T-cell (primary cell): ENCODE measurements at regions of chr9 and their contacts with region 1.

Region 1: GRCh38 chr9:131530920-131531832 is at the start of gene UCK1:
- DNase-seq: peak; percentile 31 to 89 (median 63)
- ATAC-seq: peak; percentile 89 to 94 (median 92)
- H3K4me3 ChIP-seq: peak within 1 kb of the TSS; percentile 66 to 71
- H3K4me3 Mint-ChIP-seq: peak within 1 kb of the TSS; percentile 66 to 75 (median 69)
- H3K27ac ChIP-seq: peak within 1 kb of the TSS; percentile 58
- H3K27ac Mint-ChIP-seq: peak within 1 kb of the TSS in 1 of 2 donors; percentile 75
- H3K4me1 ChIP-seq: peaks cover 16 to 46% of the 10 kb centered on the region in 2 experiments
- H3K4me1 Mint-ChIP-seq: peaks cover 25 to 39% (median 34%) of the 10 kb centered on the region in 3 donors
- H3K27me3 ChIP-seq: no peaks in the 10 kb centered on the region
- H3K27me3 Mint-ChIP-seq: no peaks in the 10 kb centered on the region
- total RNA-seq, gene UCK1: 20.0 to 34.7 (median 32.0) TPM

Region 2: DNA sequence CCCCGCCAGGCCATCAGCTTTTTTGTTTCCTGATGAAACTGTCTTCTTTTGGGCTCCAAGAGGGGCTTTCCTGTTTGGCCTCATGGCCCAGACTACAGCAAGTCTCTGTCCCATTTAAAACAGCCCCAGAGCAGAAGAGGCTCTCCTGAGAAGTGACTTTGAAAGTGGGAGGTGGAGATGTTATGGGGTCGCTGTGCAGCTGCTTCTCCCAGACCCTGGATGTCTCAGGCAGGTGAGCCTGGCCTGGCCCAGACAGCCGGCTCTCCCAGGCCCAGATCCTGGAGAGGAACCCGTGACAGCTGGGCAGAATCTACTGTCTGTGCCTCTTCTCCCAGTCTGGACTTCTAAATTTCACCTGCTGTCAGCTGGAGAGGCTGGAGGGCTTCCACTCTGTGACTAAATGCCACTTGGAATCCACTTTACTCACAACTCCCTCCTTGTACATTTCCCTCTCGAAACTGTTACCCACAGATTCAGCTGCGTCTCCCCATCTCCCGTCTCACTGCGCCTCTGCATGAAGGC is 275.4 kb before region 1 on chr9:
- CTCF ChIA-PET with region 1: no interaction called
- POLR2A ChIA-PET with region 1: interaction called in 1 of 2 experiments, 11 read pairs
- DNase-seq: peak in 1 of 35 experiments; percentile 42
- ATAC-seq: peak in 3 of 4 experiments; percentile 12 to 31 (median 23)
- H3K4me3 ChIP-seq: peak overlapping the region; percentile 55 to 60
- H3K4me3 Mint-ChIP-seq: peak overlapping the region; percentile 81 to 86 (median 81)
- H3K27ac ChIP-seq: peak overlapping the region; percentile 93
- H3K27ac Mint-ChIP-seq: peak overlapping the region; percentile 99
- H3K4me1 ChIP-seq: peaks cover 37 to 100% of the 10 kb centered on the region in 2 experiments
- H3K4me1 Mint-ChIP-seq: peaks cover 62 to 87% (median 82%) of the 10 kb centered on the region in 3 donors
- H3K27me3 ChIP-seq: no peaks in the 10 kb centered on the region
- H3K27me3 Mint-ChIP-seq: no peaks in the 10 kb centered on the region

Region 3: GRCh38 chr9:131578731-131579504 is 47.7 kb after region 1 on chr9:
- CTCF ChIA-PET with region 1: no interaction called
- POLR2A ChIA-PET with region 1: no interaction called
- DNase-seq: peak; percentile 35 to 75 (median 58)
- ATAC-seq: peak; percentile 92 to 95 (median 94)
- H3K4me3 ChIP-seq: peak overlapping the region; percentile 11 to 25
- H3K4me3 Mint-ChIP-seq: peak overlapping the region; percentile 54 to 74 (median 61)
- H3K27ac ChIP-seq: peak overlapping the region; percentile 84
- H3K27ac Mint-ChIP-seq: peak overlapping the region; percentile 86 to 97
- H3K4me1 ChIP-seq: peaks cover 16 to 43% of the 10 kb centered on the region in 2 experiments
- H3K4me1 Mint-ChIP-seq: peaks cover 24 to 34% (median 30%) of the 10 kb centered on the region in 3 donors
- H3K27me3 ChIP-seq: no peaks in the 10 kb centered on the region
- H3K27me3 Mint-ChIP-seq: no peaks in the 10 kb centered on the region